Aorta (tissue), 5 donors: ENCODE measurements at regions of chr2 and their contacts with region 1.

Region 1: DNA sequence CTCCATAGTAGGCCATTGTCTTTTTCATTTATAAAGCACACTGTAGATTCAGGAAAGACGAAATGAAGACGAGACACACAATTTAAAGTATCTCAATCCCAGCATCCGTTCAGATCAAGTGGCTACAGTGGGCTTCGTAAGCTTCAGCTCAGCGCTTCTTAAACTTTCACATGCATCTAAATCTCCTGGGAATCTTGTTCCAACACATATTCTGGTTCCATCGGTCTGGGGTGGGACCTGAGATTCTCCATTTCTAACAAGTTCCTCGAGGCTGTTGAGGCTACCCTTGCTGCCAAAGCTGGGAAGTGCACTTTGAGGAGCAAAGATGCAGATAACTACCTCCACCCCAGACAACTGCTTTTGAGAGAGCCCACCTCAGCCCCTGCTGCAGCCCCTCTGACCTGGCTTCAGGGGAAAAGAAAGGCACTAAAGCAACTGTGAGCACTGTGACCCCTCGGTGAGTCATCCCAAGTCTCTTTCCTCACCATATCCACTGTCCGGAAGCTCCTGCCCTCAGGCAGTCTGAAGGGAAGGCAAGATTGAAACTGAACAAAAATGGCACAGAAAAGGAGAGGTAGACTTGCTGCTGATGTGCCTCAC is 201.1 kb upstream of the FBXO11 start:
- DNase-seq: no peak
- ATAC-seq: no peak
- H3K4me3 ChIP-seq: no peak overlapping the region
- H3K27ac ChIP-seq: no peak overlapping the region
- H3K4me1 ChIP-seq: no peaks in the 10 kb centered on the region
- H3K27me3 ChIP-seq: no peaks in the 10 kb centered on the region

Region 2: DNA sequence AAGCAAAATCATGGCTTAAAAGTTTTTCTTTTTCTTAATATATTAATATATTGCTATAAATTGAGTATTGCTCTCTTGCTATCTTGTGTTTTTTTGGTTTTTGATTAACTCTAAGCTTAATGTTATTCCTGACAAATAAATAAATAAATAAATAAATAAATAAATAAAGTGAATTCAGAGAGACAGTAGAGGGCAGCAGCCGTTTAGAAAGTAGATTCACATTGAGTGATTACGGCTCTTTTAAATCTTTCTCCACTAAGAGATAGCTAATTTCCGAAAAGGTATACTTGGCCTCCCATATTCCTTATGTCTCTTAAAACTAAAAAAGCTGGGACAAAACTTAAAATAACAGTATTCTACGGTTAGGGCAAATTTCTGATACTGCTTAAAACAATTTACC is 670.1 kb before region 1 on chr2:
- intact Hi-C with region 1: loop called (anchors 5 to 10 kb)
- DNase-seq: no peak
- ATAC-seq: no peak
- H3K4me3 ChIP-seq: no peak overlapping the region
- H3K27ac ChIP-seq: no peak overlapping the region
- H3K4me1 ChIP-seq: peaks cover 1 to 3% of the 10 kb centered on the region in 2 donors
- H3K27me3 ChIP-seq: no peaks in the 10 kb centered on the region

Region 3: GRCh38 chr2:47767880-47768609 is 339.4 kb before region 1 on chr2:
- intact Hi-C with region 1: loop called in 1 of 2 experiments (anchors 5 kb)
- DNase-seq: peak; percentile 75 to 92
- ATAC-seq: peak; percentile 91
- H3K4me3 ChIP-seq: no peak overlapping the region
- H3K27ac ChIP-seq: no peak overlapping the region
- H3K4me1 ChIP-seq: no peaks in the 10 kb centered on the region
- H3K27me3 ChIP-seq: no peaks in the 10 kb centered on the region

Region 4: DNA sequence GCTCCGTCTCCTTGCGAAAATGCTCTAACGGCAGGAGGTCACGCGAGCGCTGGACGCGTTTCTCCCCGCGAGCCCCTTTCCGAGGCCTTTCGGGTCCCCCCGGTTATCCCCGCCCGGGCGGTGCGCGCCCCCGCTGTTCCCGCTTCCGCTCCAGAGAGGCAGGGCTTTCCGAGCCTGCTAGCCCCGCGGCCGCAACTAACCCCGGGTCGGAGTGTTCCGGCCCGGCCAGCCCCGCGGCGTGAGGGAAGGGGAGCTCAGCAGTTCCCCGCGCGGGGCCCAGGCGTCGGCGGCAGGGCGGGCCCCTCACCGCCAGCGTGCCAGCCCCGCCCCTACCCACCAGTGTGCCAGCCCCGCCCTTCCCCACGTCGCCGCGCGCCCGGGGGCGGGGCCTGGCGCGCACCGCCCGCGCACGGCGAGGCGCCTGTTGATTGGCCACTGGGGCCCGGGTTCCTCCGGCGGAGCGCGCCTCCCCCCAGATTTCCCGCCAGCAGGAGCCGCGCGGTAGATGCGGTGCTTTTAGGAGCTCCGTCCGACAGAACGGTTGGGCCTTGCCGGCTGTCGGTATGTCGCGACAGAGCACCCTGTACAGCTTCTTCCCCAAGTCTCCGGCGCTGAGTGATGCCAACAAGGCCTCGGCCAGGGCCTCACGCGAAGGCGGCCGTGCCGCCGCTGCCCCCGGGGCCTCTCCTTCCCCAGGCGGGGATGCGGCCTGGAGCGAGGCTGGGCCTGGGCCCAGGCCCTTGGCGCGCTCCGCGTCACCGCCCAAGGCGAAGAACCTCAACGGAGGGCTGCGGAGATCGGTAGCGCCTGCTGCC is 324.5 kb before region 1 on chr2 and contains the start of gene MSH6:
- intact Hi-C with region 1: loop called in 1 of 2 experiments (anchors 5 kb)
- DNase-seq: peak; percentile 93 to 96
- ATAC-seq: peak; percentile 97
- H3K4me3 ChIP-seq: peak within 1 kb of the TSS; percentile 73 to 87
- H3K27ac ChIP-seq: peak within 1 kb of the TSS in 1 of 2 donors; percentile 78
- H3K4me1 ChIP-seq: no peaks in the 10 kb centered on the region
- H3K27me3 ChIP-seq: no peaks in the 10 kb centered on the region
- total RNA-seq, gene MSH6: 29.4 to 38.3 TPM

Region 5: GRCh38 chr2:47833516-47833968 is 273.9 kb before region 1 on chr2:
- intact Hi-C with region 1: no loop called
- DNase-seq: no peak
- ATAC-seq: no peak
- H3K4me3 ChIP-seq: no peak overlapping the region
- H3K27ac ChIP-seq: no peak overlapping the region
- H3K4me1 ChIP-seq: no peaks in the 10 kb centered on the region
- H3K27me3 ChIP-seq: no peaks in the 10 kb centered on the region

Region 6: DNA sequence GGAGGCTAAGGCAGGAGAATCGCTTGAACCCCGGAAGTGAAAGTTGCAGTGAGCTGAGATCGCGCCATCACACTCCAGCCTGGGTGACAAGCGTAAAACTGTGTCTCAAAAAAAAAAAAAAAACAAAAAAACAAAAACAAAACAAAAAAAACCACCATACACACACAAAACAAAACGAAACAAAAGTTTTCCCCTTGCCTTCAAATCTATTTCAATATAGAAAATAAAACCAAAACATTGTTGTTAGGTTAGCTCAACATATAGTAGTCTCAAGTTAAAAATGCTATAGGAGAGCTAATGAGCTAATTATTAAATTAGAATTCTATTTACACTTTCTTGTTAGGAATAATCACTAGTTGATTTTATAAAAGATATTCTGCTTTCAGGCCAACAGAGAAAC is 244.5 kb before region 1 on chr2:
- intact Hi-C with region 1: loop called in 1 of 2 experiments (anchors 5 kb)
- DNase-seq: no peak
- ATAC-seq: no peak
- H3K4me3 ChIP-seq: no peak overlapping the region
- H3K27ac ChIP-seq: no peak overlapping the region
- H3K4me1 ChIP-seq: no peaks in the 10 kb centered on the region
- H3K27me3 ChIP-seq: no peaks in the 10 kb centered on the region

Region 7: GRCh38 chr2:47906157-47907038 is 201.0 kb before region 1 on chr2 and contains the start of gene FBXO11:
- intact Hi-C with region 1: loop called (anchors 2 to 5 kb)
- DNase-seq: peak; percentile 96 to 98
- ATAC-seq: peak; percentile 96
- H3K4me3 ChIP-seq: peak within 1 kb of the TSS; percentile 98 to 99
- H3K27ac ChIP-seq: peak within 1 kb of the TSS; percentile 80 to 99
- H3K4me1 ChIP-seq: no peaks in the 10 kb centered on the region
- H3K27me3 ChIP-seq: no peaks in the 10 kb centered on the region
- total RNA-seq, gene FBXO11: 64.8 to 80.4 TPM